Activated CD4-positive, alpha-beta T cell treated with anti-CD3 and anti-CD28 coated beads for 36 hours (primary cell): ENCODE measurements at regions of chr1 and their contacts with region 1.

Region 1: GRCh38 chr1:22077728-22078127 is 25.2 kb downstream of the CDC42 start:
- DNase-seq: no peak
- ATAC-seq: peak; percentile 76
- H3K4me3 Mint-ChIP-seq: no peak overlapping the region
- H3K27ac Mint-ChIP-seq: peak overlapping the region; percentile 74
- H3K4me1 Mint-ChIP-seq: peaks cover 83% of the 10 kb centered on the region
- H3K27me3 Mint-ChIP-seq: no peaks in the 10 kb centered on the region

Region 2: DNA sequence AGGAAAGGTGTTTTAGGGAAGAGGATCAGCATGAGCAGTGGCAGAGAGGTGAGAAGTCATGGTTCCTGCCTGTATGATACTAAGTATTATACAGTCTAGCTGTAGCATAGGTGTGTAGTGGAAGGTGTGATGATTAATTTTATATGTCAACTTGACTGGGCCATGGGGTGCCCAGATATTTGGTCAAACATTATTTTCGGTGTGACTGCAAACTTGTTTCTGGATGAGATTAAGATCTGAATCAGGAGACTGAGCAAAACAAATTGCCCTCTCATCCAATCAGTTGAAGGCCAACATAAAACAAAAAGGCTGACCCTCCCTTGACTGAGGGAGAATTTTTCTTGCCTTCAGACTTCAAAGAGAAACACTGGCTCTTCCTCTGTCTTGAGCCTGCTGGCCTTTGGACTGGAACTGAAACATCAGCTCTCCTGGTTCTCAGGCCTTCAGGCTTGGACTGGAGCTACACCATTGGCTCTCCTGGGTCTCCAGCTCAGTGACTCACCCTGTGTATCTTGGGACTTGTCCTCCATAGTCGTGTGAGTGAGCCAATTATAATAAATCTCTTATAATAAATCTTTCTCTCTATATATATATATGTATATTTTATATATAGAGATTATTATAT is 32.0 kb before region 1 on chr1:
- CTCF ChIA-PET with region 1: no interaction called
- POLR2A ChIA-PET with region 1: no interaction called
- intact Hi-C with region 1: no loop called
- DNase-seq: no peak
- ATAC-seq: no peak
- H3K4me3 Mint-ChIP-seq: no peak overlapping the region
- H3K27ac Mint-ChIP-seq: peak overlapping the region; percentile 63
- H3K4me1 Mint-ChIP-seq: peaks cover 62% of the 10 kb centered on the region
- H3K27me3 Mint-ChIP-seq: no peaks in the 10 kb centered on the region

Region 3: GRCh38 chr1:22057861-22058260 is 19.9 kb before region 1 on chr1:
- CTCF ChIA-PET with region 1: interaction called, 3 read pairs
- POLR2A ChIA-PET with region 1: interaction called, 5 read pairs
- intact Hi-C with region 1: loop called in 1 of 2 experiments (anchors 2 kb)
- DNase-seq: no peak
- ATAC-seq: no peak
- H3K4me3 Mint-ChIP-seq: no peak overlapping the region
- H3K27ac Mint-ChIP-seq: peak overlapping the region; percentile 42
- H3K4me1 Mint-ChIP-seq: peaks cover 76% of the 10 kb centered on the region
- H3K27me3 Mint-ChIP-seq: no peaks in the 10 kb centered on the region

Region 4: GRCh38 chr1:22064751-22065402 is 12.9 kb before region 1 on chr1:
- CTCF ChIA-PET with region 1: interaction called, 3 read pairs
- POLR2A ChIA-PET with region 1: interaction called, 5 read pairs
- intact Hi-C with region 1: loop called in 1 of 2 experiments (anchors 2 kb)
- DNase-seq: no peak
- ATAC-seq: no peak
- H3K4me3 Mint-ChIP-seq: no peak overlapping the region
- H3K27ac Mint-ChIP-seq: peak overlapping the region; percentile 81
- H3K4me1 Mint-ChIP-seq: peaks cover 87% of the 10 kb centered on the region
- H3K27me3 Mint-ChIP-seq: no peaks in the 10 kb centered on the region